Activated T-helper 2 cell treated with anti-CD3 and anti-CD28 coated beads, Interferon-gamma antibody, Interleukin-2, Interleukin-4, amounts not matched to agents 10 μg/mL and 5 μg/mL and 100 μg/mL, durations not matched to agents 14 hours and 24 hours and 36 hours (primary cell): ENCODE measurements at regions of chr12 and their contacts with region 1.

Region 1: DNA sequence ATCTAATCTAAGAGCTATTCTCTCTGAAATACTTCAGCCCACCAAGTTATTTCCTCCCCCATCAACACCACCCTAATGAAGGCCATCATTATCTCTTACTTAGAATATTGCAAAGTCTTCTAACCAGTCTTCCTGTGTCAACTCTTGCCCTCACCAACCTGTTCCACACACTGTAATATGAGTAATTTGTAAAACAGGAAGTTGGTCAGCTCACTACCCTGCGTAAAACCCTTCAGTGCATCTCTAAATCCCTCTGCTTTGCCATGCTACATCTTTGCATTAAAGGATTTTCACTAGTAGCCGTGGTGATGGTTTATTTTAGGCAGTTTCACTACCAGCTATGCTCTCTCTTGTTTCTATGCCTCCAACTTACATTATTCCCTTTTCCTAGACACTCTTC is 70.0 kb downstream of the KIF21A start:
- DNase-seq: peak; percentile 10
- H3K4me3 Mint-ChIP-seq: no peak overlapping the region
- H3K27ac Mint-ChIP-seq: peak overlapping the region; percentile 79
- H3K4me1 Mint-ChIP-seq: peaks cover 35% of the 10 kb centered on the region
- H3K27me3 Mint-ChIP-seq: no peaks in the 10 kb centered on the region

Region 2: GRCh38 chr12:39331539-39332261 is 41.2 kb before region 1 on chr12:
- intact Hi-C with region 1: loop called (anchors 5 kb)
- DNase-seq: no peak
- H3K4me3 Mint-ChIP-seq: no peak overlapping the region
- H3K27ac Mint-ChIP-seq: no peak overlapping the region
- H3K4me1 Mint-ChIP-seq: peaks cover 19% of the 10 kb centered on the region
- H3K27me3 Mint-ChIP-seq: no peaks in the 10 kb centered on the region

Region 3: GRCh38 chr12:39405580-39405979 is 32.7 kb after region 1 on chr12:
- intact Hi-C with region 1: loop called (anchors 2 kb)
- DNase-seq: no peak
- H3K4me3 Mint-ChIP-seq: no peak overlapping the region
- H3K27ac Mint-ChIP-seq: no peak overlapping the region
- H3K4me1 Mint-ChIP-seq: peaks cover 25% of the 10 kb centered on the region
- H3K27me3 Mint-ChIP-seq: no peaks in the 10 kb centered on the region

Region 4: DNA sequence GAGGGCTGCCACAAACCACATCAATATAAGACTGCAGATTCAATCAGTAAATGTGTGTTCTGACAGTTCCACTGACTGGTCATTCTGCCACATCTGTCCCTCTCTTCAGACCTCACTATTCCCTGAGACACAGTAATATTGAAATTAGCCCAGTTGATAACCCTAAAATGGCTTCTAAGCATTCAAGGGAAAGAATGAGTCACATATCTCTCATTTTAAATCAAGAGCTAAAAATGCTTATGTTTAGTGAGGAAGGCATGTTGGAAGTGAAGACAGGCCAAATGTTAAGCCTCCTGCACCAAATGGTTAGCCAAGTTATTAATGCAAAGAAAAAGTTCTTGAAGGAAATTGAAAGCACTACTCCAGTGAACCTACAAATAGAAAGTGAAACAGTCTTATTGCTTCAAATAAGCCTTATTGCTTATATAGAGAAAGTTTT is 94.5 kb after region 1 on chr12:
- intact Hi-C with region 1: loop called (anchors 1 kb)
- DNase-seq: no peak
- H3K4me3 Mint-ChIP-seq: peak overlapping the region; percentile 58
- H3K27ac Mint-ChIP-seq: peak overlapping the region; percentile 63
- H3K4me1 Mint-ChIP-seq: peaks cover 18% of the 10 kb centered on the region
- H3K27me3 Mint-ChIP-seq: peaks cover 5% of the 10 kb centered on the region